ENCODE measurements at regions of chr14 and their contacts with region 1.

Region 1: GRCh38 chr14:65164068-65164824 is 61.9 kb upstream of the MAX start:
- DNase-seq: peak; percentile 34 to 55
- H3K4me3 ChIP-seq: no peak overlapping the region
- H3K27ac ChIP-seq: no peak overlapping the region
- H3K4me1 ChIP-seq: peaks cover 17% of the 10 kb centered on the region
- H3K27me3 ChIP-seq: no peaks in the 10 kb centered on the region
- CTCF ChIP-seq: peak; percentile 97

Region 2: GRCh38 chr14:65102441-65103149 is 61.7 kb before region 1 on chr14 and contains the start of gene MAX:
- CTCF ChIA-PET with region 1: no interaction called
- POLR2A ChIA-PET with region 1: interaction called, 7 read pairs
- intact Hi-C with region 1: loop called (anchors 5 kb)
- DNase-seq: peak; percentile 96 to 99
- H3K4me3 ChIP-seq: peak within 1 kb of the TSS; percentile 88
- H3K27ac ChIP-seq: peak within 1 kb of the TSS; percentile 46
- H3K4me1 ChIP-seq: peaks cover 14% of the 10 kb centered on the region
- H3K27me3 ChIP-seq: no peaks in the 10 kb centered on the region
- CTCF ChIP-seq: no peak
- total RNA-seq, gene MAX: 76.1 and 84.1 TPM in 2 replicates

Region 3: GRCh38 chr14:65255536-65256461 is 91.6 kb after region 1 on chr14:
- CTCF ChIA-PET with region 1: no interaction called
- POLR2A ChIA-PET with region 1: no interaction called
- intact Hi-C with region 1: loop called (anchors 1 kb)
- DNase-seq: peak; percentile 92
- H3K4me3 ChIP-seq: peak overlapping the region; percentile 47; the same call in 1 of the 2 replicates
- H3K27ac ChIP-seq: peak overlapping the region; percentile 98
- H3K4me1 ChIP-seq: peaks cover 86% of the 10 kb centered on the region
- H3K27me3 ChIP-seq: no peaks in the 10 kb centered on the region
- CTCF ChIP-seq: peak; percentile 38; the same call in 1 of the 2 replicates

Region 4: GRCh38 chr14:65958664-65959562 is 794.7 kb after region 1 on chr14:
- CTCF ChIA-PET with region 1: no interaction called
- POLR2A ChIA-PET with region 1: no interaction called
- intact Hi-C with region 1: loop called (anchors 1 kb)
- DNase-seq: no peak
- H3K4me3 ChIP-seq: no peak overlapping the region
- H3K27ac ChIP-seq: no peak overlapping the region
- H3K4me1 ChIP-seq: no peaks in the 10 kb centered on the region
- H3K27me3 ChIP-seq: no peaks in the 10 kb centered on the region
- CTCF ChIP-seq: peak; percentile 74

Region 5: DNA sequence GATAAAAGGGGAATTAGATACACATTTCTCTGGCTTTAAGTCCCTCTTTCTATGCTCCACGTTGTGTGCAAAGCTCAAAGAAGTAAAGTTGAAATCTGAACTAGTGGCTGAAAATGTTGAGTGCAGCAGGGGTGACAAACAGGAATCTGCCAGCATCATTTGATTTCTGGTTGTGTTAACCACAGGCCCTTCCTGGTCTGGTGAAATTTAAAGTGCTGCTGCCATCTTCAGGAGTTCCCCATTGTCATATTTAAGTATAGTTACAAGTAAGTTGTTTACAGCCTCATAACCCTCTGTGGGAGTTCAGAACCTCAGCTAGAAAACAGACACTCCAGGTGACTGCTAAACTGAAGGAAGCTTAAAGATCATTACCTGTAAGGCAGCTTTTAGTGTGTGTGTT is 1231.1 kb after region 1 on chr14:
- CTCF ChIA-PET with region 1: no interaction called
- POLR2A ChIA-PET with region 1: no interaction called
- intact Hi-C with region 1: loop called (anchors 1 kb)
- DNase-seq: peak; percentile 10 to 56
- H3K4me3 ChIP-seq: no peak overlapping the region
- H3K27ac ChIP-seq: no peak overlapping the region
- H3K4me1 ChIP-seq: no peaks in the 10 kb centered on the region
- H3K27me3 ChIP-seq: 0 out of 2 replicates have a peak, but pooled peaks cover 4% of the 10 kb centered on the region
- CTCF ChIP-seq: 0 out of 2 replicates have a peak, but pooled peaks have one; percentile 23